Cardiac septum (tissue), 1 donor: ENCODE measurements at regions of chr6 and their contacts with region 1.

Region 1: GRCh38 chr6:34154668-34155447 is 9.0 kb upstream of the GRM4 start:
- DNase-seq: peak; percentile 69

Region 2: DNA sequence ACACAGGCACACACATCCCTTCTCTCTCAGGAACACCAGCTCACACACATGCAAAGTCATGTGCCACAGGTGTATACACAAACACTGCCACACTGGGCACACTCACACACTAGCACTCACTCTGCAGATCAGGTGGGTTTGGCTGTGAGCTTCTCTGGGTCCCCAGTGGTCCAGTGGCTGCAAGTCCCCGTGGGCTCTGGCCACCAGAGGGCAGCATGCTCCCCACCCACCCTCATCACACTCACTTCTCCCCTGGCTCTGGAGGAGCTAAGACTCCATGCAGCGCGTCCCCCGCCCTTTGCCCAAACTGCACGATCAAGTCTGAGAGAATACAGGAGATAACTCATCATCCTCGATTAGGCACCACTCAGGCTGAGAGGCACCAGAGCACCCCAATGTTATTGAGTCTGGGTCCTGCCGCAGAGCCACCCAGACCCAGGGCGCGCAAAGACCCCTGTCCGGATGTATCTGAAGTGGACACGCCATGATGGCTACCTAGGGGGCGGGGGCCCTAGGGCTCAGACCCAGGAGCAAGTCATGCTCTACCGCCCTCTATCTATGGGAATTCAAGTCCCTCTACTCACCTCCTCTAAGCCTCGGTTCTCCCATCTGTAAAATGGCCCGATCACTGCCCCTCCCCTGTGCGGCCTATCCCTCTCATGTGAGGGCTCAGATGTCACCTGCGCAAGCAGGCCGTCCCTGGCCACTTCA is 99.5 kb before region 1 on chr6:
- intact Hi-C with region 1: loop called (anchors 1 kb)
- DNase-seq: no peak

Region 3: GRCh38 chr6:34350137-34350933 is 195.5 kb after region 1 on chr6:
- intact Hi-C with region 1: no loop called
- DNase-seq: no peak